ENCODE measurements at regions of chr17 and their contacts with region 1.

Region 1: DNA sequence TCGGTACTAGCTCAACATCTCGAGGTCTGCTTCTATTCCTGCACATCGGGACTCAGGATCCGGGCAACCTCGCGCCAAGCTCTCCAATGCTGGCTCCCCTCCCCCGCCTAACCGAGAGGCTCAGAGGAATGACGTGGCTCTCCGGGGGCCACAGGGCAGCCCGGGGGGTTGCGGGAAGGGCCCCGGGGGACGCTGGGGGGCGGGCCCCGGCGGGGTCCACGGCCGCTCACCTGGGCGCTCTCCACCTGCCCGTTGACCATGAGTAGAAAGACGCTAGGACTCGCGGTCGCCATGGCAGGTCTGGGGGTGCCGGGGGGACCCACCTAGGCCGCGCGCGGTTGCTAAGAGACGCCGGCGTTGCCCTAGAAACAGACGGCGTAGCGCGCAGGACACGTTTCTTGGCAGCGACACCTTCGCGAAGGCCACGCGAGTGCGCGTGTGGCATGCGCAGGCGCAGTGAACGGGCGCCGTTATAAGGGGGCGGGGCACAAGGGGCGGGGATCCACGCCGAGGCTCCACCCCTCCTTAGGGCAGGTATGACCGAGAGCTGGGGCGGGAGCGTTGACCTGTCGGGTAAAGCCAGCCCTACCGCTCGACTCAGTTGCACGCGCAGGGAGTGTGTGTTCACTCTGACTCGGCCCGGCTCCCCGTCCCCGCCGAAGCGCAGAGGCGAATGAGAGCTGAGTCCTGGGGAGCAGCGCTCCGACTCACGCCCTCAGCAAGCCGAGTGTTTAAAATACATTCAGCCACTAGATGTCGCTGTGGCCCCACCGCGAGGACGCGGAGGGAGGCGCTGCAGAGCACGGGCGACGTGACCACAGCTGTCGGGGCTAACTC is at the start of gene B9D1:
- DNase-seq: peak; percentile 89 to 94
- ATAC-seq: peak; percentile 94 to 98 (median 96)
- H3K4me3 ChIP-seq: peak within 1 kb of the TSS; percentile 48 to 90 (median 76)
- H3K27ac ChIP-seq: peak within 1 kb of the TSS in 9 of 10 donors; percentile 67 to 82 (median 72)
- H3K4me1 ChIP-seq: peaks cover 0 to 16% (median 10%) of the 10 kb centered on the region in 9 donors
- H3K27me3 ChIP-seq: no peaks in the 10 kb centered on the region
- CTCF ChIP-seq: peak; percentile 96 to 100 (median 99)
- total RNA-seq, gene B9D1: 5.3 to 18.8 (median 10.4) TPM

Region 2: GRCh38 chr17:19317359-19318095 is 45.0 kb before region 1 on chr17:
- intact Hi-C with region 1: loop called in 1 of 10 experiments (anchors 5 kb)
- DNase-seq: peak; percentile 78 to 89
- ATAC-seq: peak; percentile 88 to 96 (median 94)
- H3K4me3 ChIP-seq: no peak overlapping the region
- H3K27ac ChIP-seq: peak overlapping the region in 9 of 10 donors; percentile 7 to 73 (median 48)
- H3K4me1 ChIP-seq: peaks cover 3 to 53% (median 39%) of the 10 kb centered on the region in 9 donors
- H3K27me3 ChIP-seq: peaks cover 0 to 76% (median 0%) of the 10 kb centered on the region in 7 donors
- CTCF ChIP-seq: peak in 8 of 9 donors; percentile 18 to 70 (median 41)

Region 3: GRCh38 chr17:19447085-19447583 is 84.6 kb after region 1 on chr17:
- intact Hi-C with region 1: loop called (anchors 1 to 5 kb)
- DNase-seq: peak in 1 of 2 donors; percentile 82
- ATAC-seq: peak; percentile 55 to 86 (median 77)
- H3K4me3 ChIP-seq: no peak overlapping the region
- H3K27ac ChIP-seq: peak overlapping the region in 3 of 10 donors; percentile 8 to 45 (median 17)
- H3K4me1 ChIP-seq: peaks cover 0 to 24% (median 3%) of the 10 kb centered on the region in 9 donors
- H3K27me3 ChIP-seq: no peaks in the 10 kb centered on the region
- CTCF ChIP-seq: peak; percentile 88 to 98 (median 95)

Region 4: DNA sequence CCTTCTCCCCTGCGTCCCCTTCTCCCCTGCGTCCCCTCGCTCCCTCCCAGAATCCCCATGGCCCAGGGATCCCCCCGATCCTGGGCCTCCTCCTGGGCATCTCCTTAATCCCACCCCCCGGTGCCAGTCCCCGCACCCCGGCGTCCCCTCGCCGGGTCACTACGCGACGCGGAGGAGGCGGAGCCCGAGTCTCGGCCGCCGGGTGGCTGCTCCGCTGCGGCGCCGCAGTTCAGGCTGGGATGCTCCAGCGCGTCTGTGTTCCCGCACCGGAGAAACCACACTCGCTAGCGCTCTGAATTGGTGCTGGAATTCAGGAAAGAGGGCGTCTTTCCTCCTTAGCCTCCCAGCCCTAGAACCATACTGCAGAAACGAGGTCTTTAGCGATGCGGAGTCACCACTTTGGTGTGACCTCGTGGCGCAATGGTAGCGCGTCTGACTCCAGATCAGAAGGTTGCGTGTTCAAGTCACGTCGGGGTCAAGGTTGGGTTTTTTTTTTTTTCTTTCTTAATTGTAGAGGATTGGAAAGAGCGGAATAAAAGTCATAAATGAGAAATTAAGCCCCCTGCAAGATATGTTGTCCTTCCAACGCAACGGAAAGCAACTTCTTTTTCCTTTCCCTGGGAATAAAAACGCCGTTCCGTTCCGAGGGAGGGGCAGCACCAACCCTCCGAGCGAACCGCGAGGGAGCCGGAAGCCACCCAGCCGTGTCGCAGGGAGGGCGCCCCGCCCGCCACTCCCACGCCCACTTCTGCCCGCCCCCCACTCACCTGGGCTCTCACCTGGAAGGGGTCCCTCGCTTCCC is 145.5 kb after region 1 on chr17:
- intact Hi-C with region 1: loop called in 2 of 10 experiments (anchors 10 kb)
- DNase-seq: peak; percentile 80 to 93
- ATAC-seq: peak; percentile 84 to 95 (median 92)
- H3K4me3 ChIP-seq: peak overlapping the region; percentile 30 to 77 (median 66)
- H3K27ac ChIP-seq: peak overlapping the region; percentile 13 to 87 (median 78)
- H3K4me1 ChIP-seq: peaks cover 0 to 9% (median 5%) of the 10 kb centered on the region in 9 donors
- H3K27me3 ChIP-seq: no peaks in the 10 kb centered on the region
- CTCF ChIP-seq: no peak

Region 5: DNA sequence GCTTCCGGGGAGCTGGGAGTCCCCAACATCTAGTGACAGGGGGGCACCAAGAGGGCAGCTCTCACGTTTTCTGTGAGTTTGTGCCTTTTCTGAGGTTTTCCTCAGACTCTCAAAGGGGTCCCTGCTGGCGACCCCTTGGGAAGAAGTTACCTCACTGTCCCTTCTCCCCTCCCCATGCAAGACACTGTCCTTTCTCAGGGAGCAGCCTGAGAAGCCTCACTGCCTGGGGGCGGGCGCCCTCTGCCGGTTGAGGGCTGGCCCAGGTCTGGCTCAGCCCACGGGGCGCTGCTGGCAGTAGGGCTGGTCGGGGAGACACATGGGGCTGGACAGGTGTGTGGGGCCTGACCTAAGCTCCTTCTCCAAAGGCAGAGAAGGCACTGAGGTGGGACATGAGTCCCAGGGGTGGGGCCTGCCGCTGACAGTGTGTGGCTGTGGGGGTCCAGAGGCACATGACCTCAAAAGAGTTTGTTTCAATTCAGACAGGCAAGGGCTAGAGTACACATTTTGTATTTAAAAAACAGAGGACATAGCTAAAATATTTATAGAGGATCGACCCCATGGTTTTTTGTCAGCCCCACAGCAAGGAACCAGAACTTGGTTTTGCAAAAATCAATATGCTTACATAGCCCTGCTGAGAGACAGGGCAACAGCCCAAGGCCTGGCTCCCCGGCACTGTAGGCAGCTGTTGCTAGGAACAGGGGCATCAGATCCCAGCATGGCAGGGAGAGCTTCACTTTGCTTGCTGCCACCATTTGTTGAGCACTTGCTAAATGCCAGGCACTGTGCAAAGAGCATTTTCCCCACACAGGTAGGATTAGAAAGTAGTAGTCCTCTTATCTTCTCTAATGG is 404.2 kb after region 1 on chr17:
- intact Hi-C with region 1: loop called (anchors 2 to 10 kb)
- DNase-seq: peak; percentile 77 to 84
- ATAC-seq: peak; percentile 89 to 95 (median 90)
- H3K4me3 ChIP-seq: no peak overlapping the region
- H3K27ac ChIP-seq: peak overlapping the region in 1 of 10 donors; percentile 3
- H3K4me1 ChIP-seq: peaks cover 0 to 11% (median 0%) of the 10 kb centered on the region in 9 donors
- H3K27me3 ChIP-seq: no peaks in the 10 kb centered on the region
- CTCF ChIP-seq: peak; percentile 80 to 99 (median 98)